ENCODE measurements at regions of chr3 and their contacts with region 1.

Region 1: DNA sequence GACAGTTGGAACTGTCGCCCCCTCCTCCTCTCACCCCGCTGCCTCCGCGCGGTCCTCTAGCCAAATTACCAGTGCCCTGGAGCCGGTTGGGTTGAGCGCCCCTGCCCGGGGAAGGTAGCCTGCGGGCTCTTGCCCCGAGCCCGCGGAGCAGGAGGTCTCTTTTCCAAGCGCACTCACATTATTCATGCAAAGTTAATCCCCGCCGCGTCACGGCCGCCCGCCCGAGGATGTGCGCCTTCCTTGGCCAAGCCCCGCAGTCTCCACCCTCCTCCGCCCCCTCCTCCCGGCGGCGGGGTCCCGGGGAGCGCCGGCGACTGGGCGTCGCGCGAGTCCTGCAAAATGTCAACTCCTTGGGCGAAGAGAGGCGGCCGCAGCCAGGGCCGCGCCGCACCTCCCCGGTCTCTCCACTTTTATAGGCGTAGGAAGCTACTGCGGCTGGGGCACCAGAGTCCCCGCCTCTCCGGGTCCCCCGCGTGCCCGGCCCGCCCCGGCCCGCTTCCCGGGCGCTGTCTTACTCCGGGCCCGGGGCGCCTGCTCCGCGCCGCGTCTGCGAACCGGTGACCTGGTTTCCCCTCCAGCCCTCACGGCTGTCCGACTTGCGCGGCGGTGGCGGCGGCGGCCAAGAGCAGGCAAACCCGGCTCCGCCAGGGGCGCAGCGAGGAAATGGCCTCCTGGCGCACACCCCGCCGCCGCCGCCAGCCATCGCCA is at the start of gene THRB:
- DNase-seq: peak; percentile 75 to 78
- ATAC-seq: peak; percentile 79
- total RNA-seq, gene THRB: 26.2 to 33.7 TPM

Region 2: DNA sequence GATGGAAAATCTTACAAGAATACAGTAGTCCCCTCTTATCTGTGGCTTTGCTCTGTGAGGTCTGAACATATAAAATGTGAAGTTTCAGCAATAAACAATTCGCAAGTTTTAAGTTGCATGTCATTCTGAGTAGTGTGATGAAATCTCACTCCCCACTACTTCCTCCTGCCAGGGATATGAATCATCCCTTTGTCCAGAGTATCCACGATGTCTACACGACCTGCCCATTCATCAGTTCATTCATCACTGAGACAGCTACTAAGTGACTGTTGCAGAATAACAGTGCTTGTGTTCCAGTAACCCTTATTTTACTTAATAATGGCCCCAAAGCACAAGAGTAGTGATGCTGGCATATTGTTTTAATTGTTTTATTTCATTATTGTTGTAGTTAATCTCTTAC is 1780.8 kb before region 1 on chr3:
- intact Hi-C with region 1: no loop called
- DNase-seq: no peak
- ATAC-seq: no peak

Region 3: DNA sequence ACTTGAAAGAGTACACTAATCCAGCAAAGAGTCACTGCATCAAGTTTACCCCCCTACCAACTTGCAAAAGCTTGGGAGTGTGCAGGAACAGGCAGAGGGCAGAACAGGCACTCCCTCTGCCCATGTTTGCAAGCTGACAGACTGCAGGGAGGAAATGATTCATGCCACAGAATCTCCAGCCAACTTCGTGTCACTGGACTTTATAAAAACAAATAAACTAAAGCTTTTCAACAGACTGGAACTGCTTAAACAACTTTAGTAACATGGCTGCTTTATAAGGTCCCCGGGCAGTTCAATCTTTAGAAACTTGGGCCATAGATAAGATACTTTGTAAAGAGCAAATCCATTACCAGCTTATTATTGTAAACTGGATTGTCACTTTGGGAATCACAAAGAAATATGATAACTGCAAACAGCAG is 129.6 kb before region 1 on chr3:
- intact Hi-C with region 1: loop called in 1 of 2 experiments (anchors 10 kb)
- DNase-seq: peak; percentile 46 to 78
- ATAC-seq: peak; percentile 93

Region 4: DNA sequence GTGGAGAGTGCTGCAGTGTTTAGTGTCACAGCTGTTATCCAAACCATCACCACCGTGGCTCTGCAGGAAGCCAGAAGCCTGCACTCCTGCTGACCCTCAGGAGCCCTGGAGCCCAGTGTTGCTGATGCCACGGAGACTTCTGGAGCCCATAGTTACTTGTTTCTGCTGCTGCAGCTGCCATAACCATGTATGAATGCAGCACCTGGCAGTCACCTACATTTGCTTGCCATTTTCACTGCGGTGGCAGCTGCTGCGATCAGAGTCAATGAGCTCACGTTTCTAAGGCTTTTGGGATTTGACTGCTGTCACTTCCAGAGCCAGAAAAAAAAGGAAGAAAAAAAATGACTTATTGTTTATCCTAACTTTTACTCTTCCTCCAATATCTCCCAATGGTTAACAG is 299.1 kb after region 1 on chr3:
- intact Hi-C with region 1: no loop called
- DNase-seq: no peak
- ATAC-seq: no peak

Measured in left colon (tissue), 2 donors.